ENCODE measurements at regions of chr11 and their contacts with region 1.

Region 1: GRCh38 chr11:5684646-5685362 is at the start of gene TRIM5:
- DNase-seq: peak; percentile 55 to 93 (median 79)
- ATAC-seq: peak; percentile 86
- H3K4me3 ChIP-seq: peak within 1 kb of the TSS; percentile 73 to 93
- H3K4me3 Mint-ChIP-seq: peak within 1 kb of the TSS; percentile 93
- H3K27ac ChIP-seq: peak within 1 kb of the TSS; percentile 74 to 92
- H3K27ac Mint-ChIP-seq: peak within 1 kb of the TSS; percentile 95
- H3K4me1 ChIP-seq: peaks cover 19% of the 10 kb centered on the region
- H3K4me1 Mint-ChIP-seq: peaks cover 67% of the 10 kb centered on the region
- H3K27me3 ChIP-seq: no peaks in the 10 kb centered on the region
- H3K27me3 Mint-ChIP-seq: no peaks in the 10 kb centered on the region
- CTCF ChIP-seq: peak; percentile 79
- total RNA-seq, gene TRIM5: 3.8 to 6.0 TPM

Region 2: GRCh38 chr11:4607781-4608666 is 1076.8 kb before region 1 on chr11 and contains the start of gene TRIM68:
- CTCF ChIA-PET with region 1: no interaction called
- POLR2A ChIA-PET with region 1: no interaction called
- intact Hi-C with region 1: loop called (anchors 10 kb)
- DNase-seq: peak; percentile 89 to 96 (median 95)
- ATAC-seq: peak; percentile 99
- H3K4me3 ChIP-seq: peak within 1 kb of the TSS; percentile 81 to 84
- H3K4me3 Mint-ChIP-seq: peak within 1 kb of the TSS; percentile 93
- H3K27ac ChIP-seq: peak within 1 kb of the TSS; percentile 76 to 85
- H3K27ac Mint-ChIP-seq: peak within 1 kb of the TSS; percentile 92
- H3K4me1 ChIP-seq: peaks cover 33% of the 10 kb centered on the region
- H3K4me1 Mint-ChIP-seq: peaks cover 56% of the 10 kb centered on the region
- H3K27me3 ChIP-seq: no peaks in the 10 kb centered on the region
- H3K27me3 Mint-ChIP-seq: no peaks in the 10 kb centered on the region
- CTCF ChIP-seq: no peak
- total RNA-seq, gene TRIM68: 6.0 to 6.9 TPM

Region 3: DNA sequence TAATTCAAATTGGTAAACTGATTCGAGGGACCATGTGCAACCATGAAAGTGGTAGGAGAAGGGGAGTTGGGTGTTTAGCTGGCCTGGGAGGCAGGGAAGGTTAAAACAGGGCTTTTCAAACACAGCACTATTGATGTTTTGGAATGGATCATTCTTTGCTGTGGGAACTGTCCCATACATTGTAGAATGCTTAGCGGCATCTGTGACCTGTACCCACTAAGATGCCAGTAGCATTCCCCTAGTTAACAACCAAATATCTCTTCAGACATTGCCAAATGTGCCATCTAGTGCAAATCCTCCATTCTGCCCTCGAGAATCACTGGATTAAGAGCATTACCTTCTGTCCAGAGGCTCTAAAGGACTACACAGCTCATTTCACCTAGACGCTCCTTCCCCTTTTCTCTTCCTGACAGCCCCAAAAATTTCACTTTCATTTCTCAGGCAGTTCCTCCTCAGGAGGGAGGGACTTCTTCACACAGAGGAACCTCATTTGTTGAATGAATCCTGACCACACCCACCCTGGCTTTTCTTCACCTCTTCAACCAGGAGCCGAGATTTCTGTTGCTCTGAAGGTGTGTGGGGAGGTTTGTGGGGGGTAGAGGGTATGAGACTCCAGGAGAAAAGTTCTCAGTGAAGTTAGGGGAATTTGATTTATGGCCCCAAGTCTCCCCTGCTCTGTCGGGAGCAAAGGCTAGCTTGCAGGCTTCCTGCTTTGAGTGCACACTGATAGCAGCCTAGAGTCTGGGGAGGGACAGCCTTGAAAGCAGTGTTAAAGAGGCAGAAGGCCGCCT is 60.1 kb before region 1 on chr11 and contains the start of gene TRIM34:
- CTCF ChIA-PET with region 1: interaction called, 3 read pairs
- POLR2A ChIA-PET with region 1: interaction called, 3 read pairs
- intact Hi-C with region 1: loop called (anchors 1 to 2 kb)
- DNase-seq: peak; percentile 19 to 88 (median 67)
- ATAC-seq: peak; percentile 98
- H3K4me3 ChIP-seq: peak within 1 kb of the TSS; percentile 62 to 75
- H3K4me3 Mint-ChIP-seq: peak within 1 kb of the TSS; percentile 92
- H3K27ac ChIP-seq: peak within 1 kb of the TSS; percentile 52 to 86
- H3K27ac Mint-ChIP-seq: peak within 1 kb of the TSS; percentile 93
- H3K4me1 ChIP-seq: peaks cover 26% of the 10 kb centered on the region
- H3K4me1 Mint-ChIP-seq: peaks cover 49% of the 10 kb centered on the region
- H3K27me3 ChIP-seq: no peaks in the 10 kb centered on the region
- H3K27me3 Mint-ChIP-seq: no peaks in the 10 kb centered on the region
- CTCF ChIP-seq: no peak
- total RNA-seq, gene TRIM34: 2.8 to 2.9 TPM

Region 4: GRCh38 chr11:5712507-5712906 is 27.7 kb after region 1 on chr11:
- CTCF ChIA-PET with region 1: interaction called, 29 read pairs
- POLR2A ChIA-PET with region 1: interaction called, 6 read pairs
- intact Hi-C with region 1: loop called (anchors 1 kb)
- DNase-seq: peak in 2 of 9 experiments; percentile 28 to 49
- ATAC-seq: no peak
- H3K4me3 ChIP-seq: no peak overlapping the region
- H3K4me3 Mint-ChIP-seq: no peak overlapping the region
- H3K27ac ChIP-seq: no peak overlapping the region
- H3K27ac Mint-ChIP-seq: peak overlapping the region; percentile 43
- H3K4me1 ChIP-seq: no peaks in the 10 kb centered on the region
- H3K4me1 Mint-ChIP-seq: no peaks in the 10 kb centered on the region
- H3K27me3 ChIP-seq: no peaks in the 10 kb centered on the region
- H3K27me3 Mint-ChIP-seq: no peaks in the 10 kb centered on the region
- CTCF ChIP-seq: peak; percentile 65

Region 5: GRCh38 chr11:5808500-5809121 is 123.8 kb after region 1 on chr11 and contains the start of gene OR52N2:
- CTCF ChIA-PET with region 1: interaction called, 14 read pairs
- POLR2A ChIA-PET with region 1: no interaction called
- intact Hi-C with region 1: loop called (anchors 1 kb)
- DNase-seq: peak; percentile 46 to 83 (median 73)
- ATAC-seq: peak; percentile 87
- H3K4me3 ChIP-seq: peak within 1 kb of the TSS; percentile 58 to 64
- H3K4me3 Mint-ChIP-seq: peak within 1 kb of the TSS; percentile 91
- H3K27ac ChIP-seq: no peak within 1 kb of the TSS
- H3K27ac Mint-ChIP-seq: no peak within 1 kb of the TSS
- H3K4me1 ChIP-seq: peaks cover 7% of the 10 kb centered on the region
- H3K4me1 Mint-ChIP-seq: peaks cover 13% of the 10 kb centered on the region
- H3K27me3 ChIP-seq: no peaks in the 10 kb centered on the region
- H3K27me3 Mint-ChIP-seq: peaks cover 14% of the 10 kb centered on the region
- CTCF ChIP-seq: peak; percentile 82
- total RNA-seq, gene OR52N2: not detected